ENCODE measurements at regions of chr10 and their contacts with region 1.

Region 1: GRCh38 chr10:28381903-28382347 is 79.1 kb upstream of the MPP7 start:
- DNase-seq: peak; percentile 81 to 94
- ATAC-seq: peak; percentile 98 to 100 (median 99)
- H3K4me3 ChIP-seq: no peak overlapping the region
- H3K4me3 Mint-ChIP-seq: no peak overlapping the region
- H3K27ac ChIP-seq: no peak overlapping the region
- H3K27ac Mint-ChIP-seq: peak overlapping the region in 1 of 2 donors; percentile 28
- H3K4me1 ChIP-seq: no peaks in the 10 kb centered on the region
- H3K4me1 Mint-ChIP-seq: peaks cover 6 to 8% of the 10 kb centered on the region in 2 donors
- H3K27me3 ChIP-seq: peaks cover 3% of the 10 kb centered on the region
- H3K27me3 Mint-ChIP-seq: peaks cover 6 to 22% of the 10 kb centered on the region in 2 donors
- CTCF ChIP-seq: peak; percentile 98

Region 2: DNA sequence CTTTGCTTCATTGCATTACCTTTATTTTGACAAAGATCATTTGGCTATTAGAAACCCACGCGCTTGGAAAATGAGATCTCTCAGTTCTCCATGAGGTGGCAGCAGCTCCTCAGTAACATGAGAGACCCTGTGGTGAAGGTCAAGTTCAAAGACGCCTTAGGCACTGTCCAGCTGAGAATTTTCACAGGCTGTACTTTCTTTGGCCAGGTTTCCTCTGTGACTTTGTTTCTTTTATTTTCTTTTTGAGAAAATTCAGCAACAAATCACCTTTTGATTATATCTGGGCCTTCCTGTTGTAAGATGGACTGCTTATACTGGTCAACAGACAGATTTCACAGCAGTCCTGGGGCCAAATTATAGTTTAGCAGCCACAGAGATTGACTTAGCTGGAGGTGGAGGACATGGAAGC is 823.3 kb before region 1 on chr10:
- intact Hi-C with region 1: loop called (anchors 5 kb)
- DNase-seq: peak in 1 of 2 donors; percentile 65
- ATAC-seq: peak in 2 of 3 donors; percentile 70 to 74
- H3K4me3 ChIP-seq: no peak overlapping the region
- H3K4me3 Mint-ChIP-seq: no peak overlapping the region
- H3K27ac ChIP-seq: no peak overlapping the region
- H3K27ac Mint-ChIP-seq: no peak overlapping the region
- H3K4me1 ChIP-seq: no peaks in the 10 kb centered on the region
- H3K4me1 Mint-ChIP-seq: peaks cover 0 to 7% of the 10 kb centered on the region in 2 donors
- H3K27me3 ChIP-seq: no peaks in the 10 kb centered on the region
- H3K27me3 Mint-ChIP-seq: no peaks in the 10 kb centered on the region
- CTCF ChIP-seq: peak; percentile 72

Region 3: GRCh38 chr10:27742195-27743011 is 639.5 kb before region 1 on chr10:
- intact Hi-C with region 1: loop called (anchors 1 kb)
- DNase-seq: peak; percentile 59 to 81
- ATAC-seq: peak; percentile 81 to 94 (median 90)
- H3K4me3 ChIP-seq: peak overlapping the region; percentile 44
- H3K4me3 Mint-ChIP-seq: peak overlapping the region; percentile 80
- H3K27ac ChIP-seq: no peak overlapping the region
- H3K27ac Mint-ChIP-seq: no peak overlapping the region
- H3K4me1 ChIP-seq: peaks cover 47% of the 10 kb centered on the region
- H3K4me1 Mint-ChIP-seq: peaks cover 19 to 21% of the 10 kb centered on the region in 2 donors
- H3K27me3 ChIP-seq: peaks cover 48% of the 10 kb centered on the region
- H3K27me3 Mint-ChIP-seq: peaks cover 57% of the 10 kb centered on the region in 2 donors
- CTCF ChIP-seq: peak; percentile 71

Region 4: GRCh38 chr10:28020080-28020860 is 361.7 kb before region 1 on chr10:
- intact Hi-C with region 1: no loop called
- DNase-seq: no peak
- ATAC-seq: no peak
- H3K4me3 ChIP-seq: no peak overlapping the region
- H3K4me3 Mint-ChIP-seq: no peak overlapping the region
- H3K27ac ChIP-seq: no peak overlapping the region
- H3K27ac Mint-ChIP-seq: no peak overlapping the region
- H3K4me1 ChIP-seq: no peaks in the 10 kb centered on the region
- H3K4me1 Mint-ChIP-seq: no peaks in the 10 kb centered on the region
- H3K27me3 ChIP-seq: no peaks in the 10 kb centered on the region
- H3K27me3 Mint-ChIP-seq: peaks cover 7 to 26% of the 10 kb centered on the region in 2 donors
- CTCF ChIP-seq: no peak

Region 5: DNA sequence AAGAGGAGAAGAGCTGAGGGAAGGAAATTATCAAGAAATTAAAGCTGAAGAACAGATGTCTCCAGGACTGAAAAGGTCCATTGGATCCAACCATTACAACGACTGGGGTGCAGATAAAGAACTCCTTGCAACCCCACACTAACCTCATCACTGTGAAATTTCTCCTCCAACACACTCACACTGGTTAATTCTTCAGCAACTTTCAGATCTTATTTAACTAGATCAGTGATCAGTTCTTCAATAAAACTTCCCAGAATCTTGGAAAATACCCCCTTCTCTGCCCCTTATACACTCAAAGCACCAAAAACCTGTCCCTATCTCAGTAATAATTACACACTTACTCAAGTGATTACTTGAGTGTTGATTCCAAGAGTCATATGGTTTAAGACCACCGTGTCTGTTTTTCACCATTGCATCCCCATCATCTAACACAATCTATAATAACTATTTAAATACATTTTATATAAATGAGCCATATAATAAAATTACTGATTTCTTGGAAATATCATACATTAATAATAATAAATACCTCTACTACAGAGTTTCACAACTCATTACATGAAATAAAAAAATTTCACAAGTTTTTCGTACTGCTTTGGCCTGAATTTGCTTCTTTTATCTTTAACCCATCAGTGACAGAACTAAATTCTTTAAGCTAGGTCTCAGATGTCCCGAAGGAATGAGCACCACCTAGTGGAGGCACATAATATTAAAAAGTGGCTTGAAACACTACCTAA is 202.8 kb before region 1 on chr10:
- intact Hi-C with region 1: loop called (anchors 1 kb)
- DNase-seq: peak in 1 of 2 donors; percentile 80
- ATAC-seq: peak; percentile 65 to 75 (median 71)
- H3K4me3 ChIP-seq: peak overlapping the region; percentile 24
- H3K4me3 Mint-ChIP-seq: peak overlapping the region; percentile 88
- H3K27ac ChIP-seq: peak overlapping the region; percentile 72
- H3K27ac Mint-ChIP-seq: peak overlapping the region; percentile 89 to 96
- H3K4me1 ChIP-seq: peaks cover 7% of the 10 kb centered on the region
- H3K4me1 Mint-ChIP-seq: peaks cover 22 to 24% of the 10 kb centered on the region in 2 donors
- H3K27me3 ChIP-seq: no peaks in the 10 kb centered on the region
- H3K27me3 Mint-ChIP-seq: no peaks in the 10 kb centered on the region
- CTCF ChIP-seq: peak; percentile 94

Region 6: DNA sequence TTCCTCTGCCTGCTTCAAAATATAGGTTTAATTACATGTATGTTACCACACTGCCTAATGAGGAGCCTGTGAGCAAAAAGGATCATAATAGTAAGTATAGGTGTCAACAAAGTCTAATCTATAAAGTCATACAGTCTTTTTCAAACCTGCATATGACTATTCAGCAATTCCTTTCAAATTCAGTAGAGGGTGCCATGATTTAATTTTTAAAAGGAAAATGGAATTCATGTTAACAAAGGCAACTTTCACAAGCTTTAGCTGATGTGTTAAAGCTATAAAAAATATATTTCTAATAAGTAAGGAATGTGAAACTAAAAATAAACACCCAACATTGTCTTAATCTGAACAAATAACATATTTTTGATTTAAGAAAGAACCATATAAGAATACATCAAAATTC is 131.1 kb before region 1 on chr10:
- intact Hi-C with region 1: loop called (anchors 1 kb)
- DNase-seq: peak in 1 of 2 donors; percentile 51
- ATAC-seq: peak in 2 of 3 donors; percentile 50 to 52
- H3K4me3 ChIP-seq: no peak overlapping the region
- H3K4me3 Mint-ChIP-seq: no peak overlapping the region
- H3K27ac ChIP-seq: no peak overlapping the region
- H3K27ac Mint-ChIP-seq: no peak overlapping the region
- H3K4me1 ChIP-seq: peaks cover 4% of the 10 kb centered on the region
- H3K4me1 Mint-ChIP-seq: peaks cover 20% of the 10 kb centered on the region in 2 donors
- H3K27me3 ChIP-seq: no peaks in the 10 kb centered on the region
- H3K27me3 Mint-ChIP-seq: no peaks in the 10 kb centered on the region
- CTCF ChIP-seq: peak; percentile 60

Region 7: GRCh38 chr10:28302638-28303488 is 79.1 kb before region 1 on chr10 and contains the start of gene MPP7:
- intact Hi-C with region 1: loop called (anchors 1 kb)
- DNase-seq: peak; percentile 97 to 99
- ATAC-seq: peak; percentile 88 to 98 (median 88)
- H3K4me3 ChIP-seq: peak within 1 kb of the TSS; percentile 59
- H3K4me3 Mint-ChIP-seq: peak within 1 kb of the TSS; percentile 96
- H3K27ac ChIP-seq: peak within 1 kb of the TSS; percentile 72
- H3K27ac Mint-ChIP-seq: peak within 1 kb of the TSS; percentile 91
- H3K4me1 ChIP-seq: peaks cover 4% of the 10 kb centered on the region
- H3K4me1 Mint-ChIP-seq: peaks cover 26 to 31% of the 10 kb centered on the region in 2 donors
- H3K27me3 ChIP-seq: no peaks in the 10 kb centered on the region
- H3K27me3 Mint-ChIP-seq: peaks cover 9% of the 10 kb centered on the region in 2 donors
- CTCF ChIP-seq: peak; percentile 57
- total RNA-seq, gene MPP7: 11.5 to 21.0 (median 19.1) TPM

Region 8: GRCh38 chr10:28334296-28334695 is 47.6 kb before region 1 on chr10:
- intact Hi-C with region 1: loop called (anchors 1 kb)
- DNase-seq: peak in 1 of 2 donors; percentile 96
- ATAC-seq: peak; percentile 59 to 84 (median 77)
- H3K4me3 ChIP-seq: peak overlapping the region; percentile 52
- H3K4me3 Mint-ChIP-seq: peak overlapping the region; percentile 91
- H3K27ac ChIP-seq: peak overlapping the region; percentile 97
- H3K27ac Mint-ChIP-seq: peak overlapping the region; percentile 95 to 100
- H3K4me1 ChIP-seq: peaks cover 57% of the 10 kb centered on the region
- H3K4me1 Mint-ChIP-seq: peaks cover 57 to 62% of the 10 kb centered on the region in 2 donors
- H3K27me3 ChIP-seq: no peaks in the 10 kb centered on the region
- H3K27me3 Mint-ChIP-seq: no peaks in the 10 kb centered on the region
- CTCF ChIP-seq: no peak

Region 9: DNA sequence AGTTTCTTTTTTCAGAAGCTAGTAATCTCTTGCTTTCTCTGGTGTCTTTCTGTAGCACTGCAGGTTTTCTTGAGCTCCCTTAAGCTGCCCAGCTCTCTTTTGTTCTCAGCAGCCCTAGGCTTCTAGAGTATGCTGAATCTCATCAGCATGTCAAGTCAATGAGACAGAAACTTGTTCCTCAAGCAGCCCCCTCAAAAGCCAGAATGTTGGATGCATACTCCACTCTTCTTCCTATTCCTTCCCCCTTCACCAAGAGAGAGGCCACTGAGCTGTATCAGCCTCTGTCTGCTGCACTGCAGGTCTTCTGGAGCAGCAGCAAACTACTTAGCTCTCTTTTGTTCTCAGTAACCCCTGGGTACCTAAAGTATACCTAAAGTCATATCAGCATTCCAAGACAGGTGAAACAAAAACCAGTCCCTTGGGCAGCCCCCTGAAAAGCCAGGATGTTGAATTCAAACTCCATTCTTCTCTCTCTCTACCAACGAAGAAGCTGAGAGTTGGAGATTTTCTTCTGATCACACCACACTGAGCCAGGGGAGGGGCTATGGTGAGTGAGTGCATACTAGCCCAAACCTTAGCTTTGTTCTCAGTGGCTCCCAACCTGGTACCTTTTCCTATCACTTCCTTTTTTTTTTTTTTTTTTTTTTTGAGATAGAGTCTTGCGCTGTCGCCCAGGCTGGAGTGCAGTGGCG is 77.7 kb after region 1 on chr10:
- intact Hi-C with region 1: no loop called
- DNase-seq: no peak
- ATAC-seq: no peak
- H3K4me3 ChIP-seq: no peak overlapping the region
- H3K4me3 Mint-ChIP-seq: no peak overlapping the region
- H3K27ac ChIP-seq: no peak overlapping the region
- H3K27ac Mint-ChIP-seq: no peak overlapping the region
- H3K4me1 ChIP-seq: no peaks in the 10 kb centered on the region
- H3K4me1 Mint-ChIP-seq: no peaks in the 10 kb centered on the region
- H3K27me3 ChIP-seq: no peaks in the 10 kb centered on the region
- H3K27me3 Mint-ChIP-seq: peaks cover 20 to 37% of the 10 kb centered on the region in 2 donors
- CTCF ChIP-seq: no peak

Measured in natural killer cell (primary cell).